Posterior vena cava (tissue), 2 donors: ENCODE measurements at regions of chr1 and their contacts with region 1.

Region 1: GRCh38 chr1:117758444-117759316 is 152.8 kb downstream of the TENT5C start:
- DNase-seq: peak; percentile 86

Region 2: DNA sequence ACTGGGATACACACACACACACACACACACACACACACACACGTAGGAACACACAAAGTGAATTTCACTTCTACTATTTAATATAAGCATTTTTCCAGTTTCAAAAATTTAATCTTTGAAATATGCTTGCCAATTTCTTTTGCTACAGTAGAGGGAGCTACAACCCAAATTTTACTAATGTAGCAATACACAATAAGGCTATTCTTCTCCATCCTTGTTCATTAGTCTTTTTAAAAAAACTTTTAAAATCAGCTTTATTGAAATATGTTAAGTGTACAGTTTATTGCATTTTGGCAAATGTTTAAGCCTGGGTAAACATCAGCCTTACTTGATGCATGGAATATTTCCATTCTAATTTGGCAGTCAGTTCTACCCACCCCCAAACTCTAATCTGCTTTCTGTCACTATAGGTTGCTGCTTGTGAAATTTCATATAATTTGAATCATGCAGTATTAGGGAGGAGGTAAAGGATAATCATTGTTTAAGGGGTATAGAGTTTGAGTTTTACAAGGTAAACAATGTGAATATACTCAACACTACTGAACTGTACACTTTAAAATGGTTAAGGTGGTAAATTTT is 245.8 kb before region 1 on chr1:
- intact Hi-C with region 1: loop called in 1 of 2 experiments (anchors 5 kb)
- DNase-seq: no peak

Region 3: DNA sequence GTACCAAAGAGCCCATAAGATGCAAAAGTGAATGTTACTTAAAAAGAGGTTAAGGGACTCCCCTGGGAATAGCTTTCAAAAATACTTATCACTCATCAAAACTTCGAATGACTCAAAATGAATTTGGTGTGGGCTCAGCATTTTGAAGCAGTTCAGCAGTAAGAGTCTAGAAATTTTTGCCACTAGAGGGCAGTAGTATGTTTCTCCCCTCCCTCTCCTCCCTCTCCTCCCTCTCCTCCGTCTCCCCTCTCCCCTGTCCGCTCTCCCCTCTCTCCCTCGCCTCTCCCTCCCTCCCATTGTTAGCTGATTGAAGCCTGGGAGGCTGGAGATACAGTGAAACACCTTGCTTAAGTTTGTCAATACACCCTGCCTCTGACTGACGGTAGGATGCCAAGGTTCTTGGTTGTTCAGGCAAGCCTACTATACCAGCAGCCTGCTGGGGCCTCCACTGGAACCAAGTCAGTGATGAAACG is 223.6 kb before region 1 on chr1:
- intact Hi-C with region 1: loop called (anchors 5 to 10 kb)
- DNase-seq: no peak

Region 4: GRCh38 chr1:117541003-117541402 is 217.7 kb before region 1 on chr1:
- intact Hi-C with region 1: loop called (anchors 5 to 10 kb)
- DNase-seq: no peak

Region 5: DNA sequence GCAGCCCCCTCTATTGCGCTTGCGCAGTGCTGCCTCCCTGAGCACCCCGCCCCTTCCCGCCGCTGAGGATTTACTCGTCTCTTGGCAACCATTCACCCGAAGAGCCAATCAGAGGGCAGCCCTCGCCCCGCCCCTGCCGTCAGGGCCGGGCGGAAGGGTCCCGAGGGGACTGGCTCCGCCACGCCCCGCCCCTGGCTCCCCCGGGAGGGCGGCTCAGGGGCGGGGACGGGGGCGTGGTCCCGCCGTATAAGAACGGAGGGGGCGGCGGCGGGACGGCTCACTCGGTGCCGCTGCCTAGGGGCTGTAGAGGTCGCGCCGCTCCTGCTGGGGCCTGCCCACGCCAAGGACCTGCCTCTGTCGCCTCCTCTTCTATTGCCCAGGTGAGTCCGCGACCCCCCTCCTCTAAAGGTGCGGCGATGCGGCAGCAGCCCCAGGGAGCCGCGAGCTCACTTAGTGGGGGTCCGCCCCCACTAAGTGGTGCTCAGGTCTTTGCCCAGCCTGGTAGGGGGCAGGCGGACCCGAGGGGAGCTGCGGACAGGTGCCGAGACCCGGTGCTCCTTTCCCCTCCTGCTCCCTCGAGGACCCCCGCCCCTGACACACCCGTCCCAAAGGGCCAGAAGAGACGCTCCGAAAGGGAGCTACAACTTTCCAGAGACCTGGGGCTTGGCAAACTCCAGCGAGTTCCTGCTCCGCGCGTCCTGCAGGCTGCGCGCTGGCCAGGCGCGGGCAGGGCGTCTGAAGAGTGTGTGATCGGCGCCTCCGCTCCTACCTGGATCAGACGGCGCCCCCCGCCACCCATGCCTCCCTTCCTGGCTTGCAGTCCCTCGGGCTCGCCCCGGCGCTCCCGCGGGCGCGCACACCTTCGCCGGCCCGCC is 152.7 kb before region 1 on chr1 and contains the start of gene TENT5C:
- intact Hi-C with region 1: loop called in 1 of 2 experiments (anchors 5 kb)
- DNase-seq: peak; percentile 99
- total RNA-seq, gene TENT5C: 3.6 to 12.4 TPM